MCF 10A (cell line): ENCODE measurements at regions of chr3 and their contacts with region 1.

Region 1: GRCh38 chr3:39499651-39500240 is 32.3 kb downstream of the MOBP start:
- DNase-seq: no peak
- H3K4me3 Mint-ChIP-seq: no peak overlapping the region
- H3K27ac Mint-ChIP-seq: no peak overlapping the region
- H3K4me1 Mint-ChIP-seq: peaks cover 6% of the 10 kb centered on the region
- H3K27me3 Mint-ChIP-seq: peaks cover 45% of the 10 kb centered on the region
- CTCF ChIP-seq: no peak

Region 2: GRCh38 chr3:39021029-39021428 is 478.7 kb before region 1 on chr3:
- CTCF ChIA-PET with region 1: no interaction called
- POLR2A ChIA-PET with region 1: no interaction called
- intact Hi-C with region 1: no loop called
- DNase-seq: no peak
- H3K4me3 Mint-ChIP-seq: no peak overlapping the region
- H3K27ac Mint-ChIP-seq: no peak overlapping the region
- H3K4me1 Mint-ChIP-seq: no peaks in the 10 kb centered on the region
- H3K27me3 Mint-ChIP-seq: peaks cover 16% of the 10 kb centered on the region
- CTCF ChIP-seq: no peak

Region 3: GRCh38 chr3:39327746-39328349 is 171.9 kb before region 1 on chr3:
- CTCF ChIA-PET with region 1: no interaction called
- POLR2A ChIA-PET with region 1: no interaction called
- intact Hi-C with region 1: no loop called
- DNase-seq: no peak
- H3K4me3 Mint-ChIP-seq: no peak overlapping the region
- H3K27ac Mint-ChIP-seq: no peak overlapping the region
- H3K4me1 Mint-ChIP-seq: no peaks in the 10 kb centered on the region
- H3K27me3 Mint-ChIP-seq: no peaks in the 10 kb centered on the region
- CTCF ChIP-seq: no peak

Region 4: DNA sequence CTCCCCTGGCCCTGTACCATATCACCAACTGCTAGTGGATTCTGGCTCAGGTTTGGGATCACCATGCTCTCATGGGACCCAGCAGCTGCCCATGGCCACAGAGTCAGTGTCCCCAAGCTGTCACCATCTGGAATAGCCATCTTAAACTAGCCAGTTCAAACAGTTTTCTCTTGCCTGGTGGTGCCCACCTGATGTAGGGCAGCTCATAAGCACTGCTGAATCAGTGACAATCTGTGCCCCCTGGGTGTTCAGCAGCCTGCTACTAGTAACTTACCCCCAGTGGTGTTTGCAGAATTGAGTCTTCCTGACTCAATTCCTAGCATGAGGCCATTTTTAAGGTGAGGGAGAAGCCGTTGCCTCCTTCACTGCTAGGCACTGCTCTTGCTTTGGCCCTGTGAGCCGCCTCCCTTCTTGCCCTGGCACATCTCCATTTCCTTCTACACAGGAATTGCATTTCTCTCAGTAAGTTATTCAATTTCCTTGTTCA is 85.3 kb before region 1 on chr3:
- CTCF ChIA-PET with region 1: interaction called, 65 read pairs
- POLR2A ChIA-PET with region 1: interaction called, 8 read pairs
- intact Hi-C with region 1: loop called (anchors 1 kb)
- DNase-seq: peak; percentile 27
- H3K4me3 Mint-ChIP-seq: no peak overlapping the region
- H3K27ac Mint-ChIP-seq: no peak overlapping the region
- H3K4me1 Mint-ChIP-seq: peaks cover 21% of the 10 kb centered on the region
- H3K27me3 Mint-ChIP-seq: no peaks in the 10 kb centered on the region
- CTCF ChIP-seq: no peak

Region 5: DNA sequence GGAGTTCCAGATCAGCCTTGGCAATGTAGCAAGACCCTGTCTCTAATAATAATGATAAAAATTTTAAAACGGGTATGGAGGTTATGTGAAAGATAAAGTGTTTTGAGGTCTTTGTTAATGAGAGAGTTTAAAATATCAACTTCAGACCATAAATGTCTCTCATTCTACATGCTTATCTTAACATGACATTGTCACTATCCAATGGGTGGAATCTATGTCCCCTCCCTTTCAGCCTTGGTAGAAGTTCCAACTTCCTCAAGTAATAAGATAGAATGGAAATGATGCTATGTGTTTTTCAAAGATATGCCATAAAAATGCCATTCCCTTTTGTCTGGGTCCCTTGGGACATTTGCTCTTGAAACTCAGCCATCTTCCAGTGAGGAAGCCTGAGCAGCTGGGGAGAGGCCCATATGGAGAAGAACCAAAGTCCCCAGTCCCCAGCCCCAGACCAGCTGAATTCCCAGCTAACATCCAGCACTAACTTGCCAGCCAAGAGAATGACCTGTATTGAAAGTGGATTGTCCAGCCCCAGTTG is 76.2 kb before region 1 on chr3:
- CTCF ChIA-PET with region 1: interaction called, 22 read pairs
- POLR2A ChIA-PET with region 1: no interaction called
- intact Hi-C with region 1: no loop called
- DNase-seq: no peak
- H3K4me3 Mint-ChIP-seq: no peak overlapping the region
- H3K27ac Mint-ChIP-seq: no peak overlapping the region
- H3K4me1 Mint-ChIP-seq: no peaks in the 10 kb centered on the region
- H3K27me3 Mint-ChIP-seq: no peaks in the 10 kb centered on the region
- CTCF ChIP-seq: no peak

Region 6: DNA sequence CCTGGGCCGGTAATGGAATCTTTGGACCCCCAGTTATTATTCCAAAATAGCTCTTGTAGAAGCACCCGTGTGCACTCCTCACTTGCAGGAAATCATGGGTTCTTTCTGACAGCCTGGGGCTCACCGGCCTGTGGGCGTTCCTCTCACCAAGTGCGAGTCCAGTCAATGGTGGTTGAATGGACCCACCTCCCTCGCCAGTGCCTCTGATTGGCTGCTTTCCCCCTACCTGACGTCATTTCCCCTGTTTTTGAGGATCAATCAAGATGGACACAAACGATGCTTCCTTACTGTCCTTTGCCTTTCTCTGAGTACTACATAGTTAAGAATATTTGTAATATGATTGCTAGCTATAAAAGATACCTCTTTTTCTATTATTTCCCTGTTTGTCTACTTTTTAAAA is 14.2 kb before region 1 on chr3:
- CTCF ChIA-PET with region 1: interaction called, 18 read pairs
- POLR2A ChIA-PET with region 1: no interaction called
- intact Hi-C with region 1: no loop called
- DNase-seq: no peak
- H3K4me3 Mint-ChIP-seq: no peak overlapping the region
- H3K27ac Mint-ChIP-seq: no peak overlapping the region
- H3K4me1 Mint-ChIP-seq: no peaks in the 10 kb centered on the region
- H3K27me3 Mint-ChIP-seq: no peaks in the 10 kb centered on the region
- CTCF ChIP-seq: no peak

Region 7: GRCh38 chr3:39548282-39548681 is 48.5 kb after region 1 on chr3:
- CTCF ChIA-PET with region 1: no interaction called
- POLR2A ChIA-PET with region 1: no interaction called
- intact Hi-C with region 1: no loop called
- DNase-seq: peak; percentile 89
- H3K4me3 Mint-ChIP-seq: peak overlapping the region; percentile 24
- H3K27ac Mint-ChIP-seq: peak overlapping the region; percentile 93
- H3K4me1 Mint-ChIP-seq: peaks cover 10% of the 10 kb centered on the region
- H3K27me3 Mint-ChIP-seq: no peaks in the 10 kb centered on the region
- CTCF ChIP-seq: no peak

Region 8: GRCh38 chr3:39882111-39882510 is 382.4 kb after region 1 on chr3:
- CTCF ChIA-PET with region 1: no interaction called
- POLR2A ChIA-PET with region 1: no interaction called
- intact Hi-C with region 1: no loop called
- DNase-seq: no peak
- H3K4me3 Mint-ChIP-seq: no peak overlapping the region
- H3K27ac Mint-ChIP-seq: no peak overlapping the region
- H3K4me1 Mint-ChIP-seq: peaks cover 4% of the 10 kb centered on the region
- H3K27me3 Mint-ChIP-seq: no peaks in the 10 kb centered on the region
- CTCF ChIP-seq: no peak